ENCODE measurements at regions of chr4 and their contacts with region 1.

Region 1: GRCh38 chr4:129641179-129641578 is 545.2 kb downstream of the C4orf33 start:
- DNase-seq: peak in 1 of 2 donors; percentile 22
- H3K4me3 ChIP-seq: no peak overlapping the region
- CTCF ChIP-seq: no peak
- POLR2A ChIP-seq: no peak

Region 2: DNA sequence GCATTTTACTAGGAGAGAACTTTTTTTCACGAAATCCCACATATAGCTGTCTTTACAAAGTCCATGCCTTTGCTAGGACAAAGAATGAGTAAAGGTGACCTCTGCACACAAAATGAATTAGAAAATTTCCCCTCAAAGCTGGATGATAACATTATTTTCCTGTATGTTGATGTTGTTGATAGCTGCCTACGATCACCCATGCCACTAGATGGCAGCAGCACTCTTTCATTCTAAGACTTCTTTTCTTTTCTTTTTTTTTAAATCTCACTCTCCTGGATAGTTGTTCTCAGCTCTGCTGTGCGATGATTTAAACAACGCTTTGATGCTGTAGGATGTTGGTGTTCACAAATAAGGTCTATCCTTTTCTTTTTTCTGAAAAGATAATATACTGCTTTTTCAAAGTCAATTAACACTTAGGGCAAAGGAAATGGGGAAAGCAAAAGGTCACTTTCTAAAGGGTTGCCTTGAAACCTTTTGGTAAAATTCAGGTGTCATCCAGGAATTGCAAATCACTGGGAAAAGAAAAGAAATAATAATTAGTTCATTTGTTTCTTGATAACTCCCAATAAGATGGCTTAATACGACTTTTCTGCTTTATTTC is 278.4 kb before region 1 on chr4:
- intact Hi-C with region 1: loop called (anchors 10 kb)
- DNase-seq: peak in 1 of 2 donors; percentile 21
- H3K4me3 ChIP-seq: no peak overlapping the region
- CTCF ChIP-seq: peak in 1 of 3 donors; percentile 27
- POLR2A ChIP-seq: no peak